ENCODE measurements at regions of chr9 and their contacts with region 1.

Region 1: GRCh38 chr9:8946461-8946860 is 1146.9 kb upstream of the DMAC1 start:
- DNase-seq: no peak
- ATAC-seq: no peak
- H3K4me3 ChIP-seq: no peak overlapping the region
- H3K4me3 Mint-ChIP-seq: no peak overlapping the region
- H3K27ac ChIP-seq: no peak overlapping the region
- H3K27ac Mint-ChIP-seq: no peak overlapping the region
- H3K4me1 ChIP-seq: no peaks in the 10 kb centered on the region
- H3K4me1 Mint-ChIP-seq: no peaks in the 10 kb centered on the region
- H3K27me3 ChIP-seq: no peaks in the 10 kb centered on the region
- H3K27me3 Mint-ChIP-seq: no peaks in the 10 kb centered on the region
- CTCF ChIP-seq: no peak

Region 2: GRCh38 chr9:8961186-8961851 is 14.9 kb after region 1 on chr9:
- CTCF ChIA-PET with region 1: no interaction called
- POLR2A ChIA-PET with region 1: no interaction called
- intact Hi-C with region 1: loop called in 1 of 2 experiments (anchors 1 kb)
- DNase-seq: no peak
- ATAC-seq: no peak
- H3K4me3 ChIP-seq: no peak overlapping the region
- H3K4me3 Mint-ChIP-seq: no peak overlapping the region
- H3K27ac ChIP-seq: no peak overlapping the region
- H3K27ac Mint-ChIP-seq: no peak overlapping the region
- H3K4me1 ChIP-seq: no peaks in the 10 kb centered on the region
- H3K4me1 Mint-ChIP-seq: no peaks in the 10 kb centered on the region
- H3K27me3 ChIP-seq: no peaks in the 10 kb centered on the region
- H3K27me3 Mint-ChIP-seq: no peaks in the 10 kb centered on the region
- CTCF ChIP-seq: no peak

Region 3: DNA sequence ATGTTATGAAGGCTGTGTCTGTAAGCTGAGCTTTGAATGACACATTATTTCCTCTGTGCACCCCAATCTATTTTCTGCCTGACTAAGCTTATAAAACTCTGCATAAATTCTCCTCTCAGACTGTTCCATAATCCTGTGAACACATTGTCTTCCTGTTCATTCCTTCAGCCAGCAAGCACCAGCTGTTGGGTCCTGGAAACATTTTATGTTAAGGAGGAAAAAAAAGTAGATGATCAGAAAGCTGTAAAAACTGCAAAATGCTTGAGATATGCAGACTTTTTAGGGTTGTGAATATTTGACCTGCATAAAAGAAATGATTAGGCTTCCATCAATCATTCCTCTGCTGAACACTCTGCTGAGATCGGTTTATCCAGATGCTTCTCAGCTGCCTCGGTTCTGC is 99.1 kb after region 1 on chr9:
- CTCF ChIA-PET with region 1: no interaction called
- POLR2A ChIA-PET with region 1: no interaction called
- intact Hi-C with region 1: no loop called
- DNase-seq: no peak
- ATAC-seq: no peak
- H3K4me3 ChIP-seq: no peak overlapping the region
- H3K4me3 Mint-ChIP-seq: no peak overlapping the region
- H3K27ac ChIP-seq: no peak overlapping the region
- H3K27ac Mint-ChIP-seq: no peak overlapping the region
- H3K4me1 ChIP-seq: no peaks in the 10 kb centered on the region
- H3K4me1 Mint-ChIP-seq: no peaks in the 10 kb centered on the region
- H3K27me3 ChIP-seq: no peaks in the 10 kb centered on the region
- H3K27me3 Mint-ChIP-seq: no peaks in the 10 kb centered on the region
- CTCF ChIP-seq: no peak

Region 4: DNA sequence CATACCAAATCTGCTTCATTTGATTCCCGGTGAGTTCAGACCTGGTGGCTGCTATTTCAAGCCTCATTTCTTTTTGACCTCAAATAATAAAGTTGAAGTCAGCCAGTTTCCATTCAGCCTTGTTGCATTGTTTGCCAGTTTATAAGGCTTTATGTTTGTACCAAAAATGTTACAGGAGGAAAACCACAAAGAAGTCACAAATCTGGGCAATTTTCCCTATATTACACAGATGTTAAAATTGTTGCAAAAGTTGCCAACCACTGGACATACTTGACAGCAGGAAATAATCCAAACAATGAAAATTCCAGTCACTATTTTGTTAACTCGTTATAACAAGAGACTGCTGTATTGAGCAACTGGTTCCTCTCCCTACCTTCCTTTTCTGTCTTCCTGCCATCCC is 178.2 kb after region 1 on chr9:
- CTCF ChIA-PET with region 1: no interaction called
- POLR2A ChIA-PET with region 1: no interaction called
- intact Hi-C with region 1: no loop called
- DNase-seq: no peak
- ATAC-seq: no peak
- H3K4me3 ChIP-seq: no peak overlapping the region
- H3K4me3 Mint-ChIP-seq: no peak overlapping the region
- H3K27ac ChIP-seq: no peak overlapping the region
- H3K27ac Mint-ChIP-seq: no peak overlapping the region
- H3K4me1 ChIP-seq: no peaks in the 10 kb centered on the region
- H3K4me1 Mint-ChIP-seq: no peaks in the 10 kb centered on the region
- H3K27me3 ChIP-seq: no peaks in the 10 kb centered on the region
- H3K27me3 Mint-ChIP-seq: no peaks in the 10 kb centered on the region
- CTCF ChIP-seq: no peak